A673 (cell line): ENCODE measurements at regions of chr1 and their contacts with region 1.

Region 1: GRCh38 chr1:229227298-229227919 is 43.5 kb upstream of the RAB4A start:
- DNase-seq: peak; percentile 78
- H3K4me3 ChIP-seq: no peak overlapping the region
- H3K27ac ChIP-seq: no peak overlapping the region
- H3K4me1 ChIP-seq: peaks cover 34% of the 10 kb centered on the region
- H3K27me3 ChIP-seq: no peaks in the 10 kb centered on the region
- CTCF ChIP-seq: peak; percentile 96

Region 2: GRCh38 chr1:228486596-228487335 is 740.6 kb before region 1 on chr1:
- CTCF ChIA-PET with region 1: no interaction called
- POLR2A ChIA-PET with region 1: no interaction called
- intact Hi-C with region 1: no loop called
- DNase-seq: peak; percentile 93
- H3K4me3 ChIP-seq: peak overlapping the region; percentile 94
- H3K27ac ChIP-seq: peak overlapping the region; percentile 98
- H3K4me1 ChIP-seq: peaks cover 40% of the 10 kb centered on the region
- H3K27me3 ChIP-seq: no peaks in the 10 kb centered on the region
- CTCF ChIP-seq: no peak

Region 3: DNA sequence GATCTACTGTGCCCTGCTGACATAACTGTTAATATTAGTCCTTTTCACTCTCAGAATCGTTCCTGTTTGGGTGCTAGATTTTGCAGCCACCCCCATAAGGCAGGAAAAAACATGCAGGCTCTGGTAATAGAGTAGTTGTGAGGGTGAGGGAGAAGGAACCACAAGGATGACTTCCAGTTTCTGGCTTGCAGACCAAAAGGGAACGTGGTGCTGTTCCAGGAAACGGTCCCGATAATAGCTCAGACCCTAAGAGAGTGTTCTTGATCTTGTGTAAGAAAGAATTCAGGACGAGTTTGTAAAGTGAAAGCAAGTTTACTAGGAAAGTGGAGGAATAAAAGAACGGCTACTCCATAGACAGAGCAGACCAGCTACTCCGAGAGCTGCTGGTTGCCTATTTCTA is 542.8 kb before region 1 on chr1:
- CTCF ChIA-PET with region 1: no interaction called
- POLR2A ChIA-PET with region 1: no interaction called
- intact Hi-C with region 1: loop called (anchors 10 kb)
- DNase-seq: no peak
- H3K4me3 ChIP-seq: no peak overlapping the region
- H3K27ac ChIP-seq: no peak overlapping the region
- H3K4me1 ChIP-seq: no peaks in the 10 kb centered on the region
- H3K27me3 ChIP-seq: no peaks in the 10 kb centered on the region
- CTCF ChIP-seq: no peak

Region 4: GRCh38 chr1:228734881-228735801 is 492.3 kb before region 1 on chr1 and contains the start of gene RHOU:
- CTCF ChIA-PET with region 1: no interaction called
- POLR2A ChIA-PET with region 1: no interaction called
- intact Hi-C with region 1: loop called (anchors 2 kb)
- DNase-seq: peak; percentile 73
- H3K4me3 ChIP-seq: peak within 1 kb of the TSS; percentile 53
- H3K27ac ChIP-seq: no peak within 1 kb of the TSS
- H3K4me1 ChIP-seq: peaks cover 8% of the 10 kb centered on the region
- H3K27me3 ChIP-seq: peaks cover 45% of the 10 kb centered on the region
- CTCF ChIP-seq: peak; percentile 43; the same call in 1 of the 2 replicates
- total RNA-seq, gene RHOU: 1.2 and 1.8 TPM in 2 replicates

Region 5: DNA sequence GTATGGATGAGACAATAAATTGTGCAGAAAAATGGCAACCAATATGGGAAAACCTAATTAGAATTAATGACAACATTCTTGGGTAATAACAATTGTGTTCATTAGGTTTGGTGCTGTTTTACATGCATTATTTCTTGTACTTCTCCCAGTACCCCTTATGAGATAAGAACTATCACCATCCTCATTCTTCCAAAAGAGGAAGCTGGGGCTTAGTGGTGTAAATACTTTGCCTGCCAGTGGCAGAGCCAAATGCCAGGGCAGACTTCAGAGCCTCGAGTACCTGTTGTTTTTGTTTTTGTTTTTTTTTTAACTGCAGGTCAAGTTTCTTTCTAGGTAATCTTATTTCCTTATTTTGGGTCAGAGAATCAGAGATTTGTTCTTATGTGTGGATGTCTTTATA is 285.7 kb before region 1 on chr1:
- CTCF ChIA-PET with region 1: no interaction called
- POLR2A ChIA-PET with region 1: interaction called, 12 read pairs
- intact Hi-C with region 1: no loop called
- DNase-seq: no peak
- H3K4me3 ChIP-seq: no peak overlapping the region
- H3K27ac ChIP-seq: no peak overlapping the region
- H3K4me1 ChIP-seq: no peaks in the 10 kb centered on the region
- H3K27me3 ChIP-seq: no peaks in the 10 kb centered on the region
- CTCF ChIP-seq: no peak